H1 (cell line): ENCODE measurements at regions of chr7 and their contacts with region 1.

Region 1: DNA sequence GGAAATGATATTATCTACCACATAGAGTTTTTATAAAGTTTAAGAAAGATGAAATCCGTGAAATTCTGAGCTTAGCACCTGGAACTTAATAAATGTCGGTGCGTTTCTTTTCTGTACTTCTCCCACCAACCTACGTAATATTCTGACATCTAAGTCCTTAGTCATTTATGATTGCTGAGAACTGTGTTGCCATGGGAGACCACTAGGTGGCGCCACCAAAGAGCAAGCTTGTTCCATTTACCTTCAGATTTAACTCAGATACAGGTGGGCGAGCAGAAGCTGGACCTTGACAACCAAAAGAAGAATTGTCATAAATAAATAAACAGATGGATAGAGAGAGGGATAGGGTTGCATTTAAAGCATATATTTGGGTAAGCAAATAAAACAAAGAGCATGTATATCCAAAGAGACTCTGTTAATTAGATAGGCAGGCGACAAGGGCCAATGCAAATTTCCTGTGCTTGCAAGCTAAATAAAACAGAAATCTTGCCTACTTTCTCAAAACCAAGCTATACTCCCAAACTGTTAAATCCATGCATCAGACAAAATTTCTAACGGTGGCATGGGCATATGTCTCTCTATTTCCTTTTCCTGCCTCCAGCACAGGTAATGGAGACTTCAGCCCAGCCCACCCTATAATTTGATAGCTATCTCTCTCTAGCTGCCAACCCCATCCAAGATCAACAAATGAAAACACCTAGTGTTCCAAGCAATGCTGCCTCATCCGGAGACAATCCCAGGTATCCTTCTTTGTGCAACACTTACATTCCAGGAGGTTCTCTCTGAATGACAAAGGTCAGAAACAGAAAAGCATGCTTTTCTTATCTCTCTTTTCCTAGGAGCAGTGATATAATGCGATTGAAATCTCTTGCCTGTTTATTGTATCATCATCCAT is 699.6 kb downstream of the INHBA start:
- DNase-seq: peak; percentile 68 to 86
- H3K4me3 ChIP-seq: no peak overlapping the region
- H3K27ac ChIP-seq: no peak overlapping the region
- H3K4me1 ChIP-seq: peaks cover 0 to 3% (median 1%) of the 10 kb centered on the region in 4 experiments; a peak in 1 of 7 replicates
- H3K27me3 ChIP-seq: no peaks in the 10 kb centered on the region
- CTCF ChIP-seq: peak; percentile 33 to 87 (median 75)
- EP300 ChIP-seq: no peak
- POLR2A ChIP-seq: no peak
- RAD21 ChIP-seq: peak; percentile 77 to 83

Region 2: DNA sequence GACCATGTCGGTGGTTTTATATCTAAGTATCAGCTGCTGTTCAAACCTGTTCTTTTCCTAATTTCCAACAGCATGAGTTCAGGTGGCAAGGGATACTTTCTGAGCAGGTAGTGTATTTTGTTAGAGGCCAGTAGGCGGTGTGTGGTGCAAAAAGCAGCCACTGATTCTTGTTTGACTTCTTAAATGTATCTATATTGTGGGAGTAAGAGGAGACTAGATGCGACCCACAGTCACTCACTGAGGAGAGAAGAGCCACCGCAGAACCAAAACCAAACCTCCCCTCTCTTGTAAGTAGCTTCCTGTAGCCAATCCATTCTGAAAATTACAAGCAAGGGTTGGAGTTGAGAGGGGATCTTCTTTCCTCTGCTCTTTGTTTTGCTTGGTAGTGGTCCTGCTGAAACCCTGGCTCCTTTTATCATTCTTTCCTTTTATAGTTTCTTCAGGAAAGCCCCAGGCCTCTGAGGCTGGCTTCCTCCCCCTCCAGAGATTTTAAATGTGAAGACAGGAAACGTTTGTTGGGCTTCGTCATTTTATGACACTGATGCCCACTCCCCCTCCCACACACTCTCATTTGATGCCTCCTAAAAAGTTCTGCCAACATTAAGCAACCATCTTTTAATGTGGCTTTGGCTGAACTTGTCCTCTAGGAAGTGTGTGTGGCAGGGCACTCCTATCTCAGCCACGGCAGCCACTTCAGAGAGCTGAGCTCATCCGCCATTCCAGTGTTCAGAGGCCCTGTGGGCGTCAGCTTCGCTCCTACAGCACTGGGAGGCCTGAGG is 302.4 kb before region 1 on chr7:
- CTCF ChIA-PET with region 1: no interaction called
- POLR2A ChIA-PET with region 1: no interaction called
- DNase-seq: no peak
- H3K4me3 ChIP-seq: no peak overlapping the region
- H3K27ac ChIP-seq: no peak overlapping the region
- H3K4me1 ChIP-seq: peaks cover 0 to 4% (median 2%) of the 10 kb centered on the region in 4 experiments; a peak in 4 of 7 replicates
- H3K27me3 ChIP-seq: no peaks in the 10 kb centered on the region
- CTCF ChIP-seq: peak in 1 of 3 experiments; percentile 20; a peak in 1 of 4 replicates
- EP300 ChIP-seq: no peak
- POLR2A ChIP-seq: no peak
- RAD21 ChIP-seq: peak; percentile 23 to 28; a peak in 2 of 4 replicates

Region 3: GRCh38 chr7:41020056-41020455 is 16.8 kb after region 1 on chr7:
- CTCF ChIA-PET with region 1: interaction called, 17 read pairs
- POLR2A ChIA-PET with region 1: no interaction called
- DNase-seq: no peak
- H3K4me3 ChIP-seq: no peak overlapping the region
- H3K27ac ChIP-seq: no peak overlapping the region
- H3K4me1 ChIP-seq: no peaks in the 10 kb centered on the region
- H3K27me3 ChIP-seq: no peaks in the 10 kb centered on the region
- CTCF ChIP-seq: no peak
- EP300 ChIP-seq: no peak
- POLR2A ChIP-seq: no peak
- RAD21 ChIP-seq: no peak

Region 4: DNA sequence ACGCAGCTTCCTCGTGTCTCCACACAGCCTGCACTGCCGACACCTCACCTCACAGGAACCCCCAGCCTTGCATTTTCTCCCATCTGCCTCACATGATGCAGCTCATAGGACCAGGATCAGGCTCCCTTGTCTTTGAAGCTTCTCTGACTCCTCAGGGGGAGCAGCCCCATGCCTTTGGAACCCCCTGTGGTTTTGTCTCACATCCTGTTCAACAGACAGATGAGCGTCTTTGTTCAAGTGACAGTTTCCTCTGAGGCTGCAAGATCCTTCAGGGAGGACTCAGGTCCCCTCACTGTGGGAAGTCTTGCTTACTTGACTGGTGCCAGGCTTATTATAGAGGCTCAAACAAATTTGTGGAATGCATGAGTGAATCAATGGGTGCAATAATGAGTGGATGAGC is 32.5 kb after region 1 on chr7:
- CTCF ChIA-PET with region 1: interaction called, 11 read pairs
- POLR2A ChIA-PET with region 1: no interaction called
- DNase-seq: no peak
- H3K4me3 ChIP-seq: no peak overlapping the region
- H3K27ac ChIP-seq: no peak overlapping the region
- H3K4me1 ChIP-seq: peaks cover 0 to 2% (median 0%) of the 10 kb centered on the region in 4 experiments; a peak in 1 of 7 replicates
- H3K27me3 ChIP-seq: no peaks in the 10 kb centered on the region
- CTCF ChIP-seq: no peak
- EP300 ChIP-seq: no peak
- POLR2A ChIP-seq: no peak
- RAD21 ChIP-seq: no peak